ENCODE measurements at regions of chr9 and their contacts with region 1.

Region 1: GRCh38 chr9:15349892-15350778 is 43.1 kb upstream of the TTC39B start:
- DNase-seq: peak in 6 of 14 experiments; percentile 18 to 55 (median 23)
- ATAC-seq: no peak
- H3K4me3 ChIP-seq: no peak overlapping the region
- H3K4me3 Mint-ChIP-seq: no peak overlapping the region
- H3K27ac ChIP-seq: no peak overlapping the region
- H3K27ac Mint-ChIP-seq: no peak overlapping the region
- H3K4me1 ChIP-seq: peaks cover 11% of the 10 kb centered on the region
- H3K4me1 Mint-ChIP-seq: peaks cover 16% of the 10 kb centered on the region
- H3K27me3 ChIP-seq: no peaks in the 10 kb centered on the region
- H3K27me3 Mint-ChIP-seq: no peaks in the 10 kb centered on the region
- CTCF ChIP-seq: no peak

Region 2: GRCh38 chr9:15295761-15296405 is 54.3 kb before region 1 on chr9:
- CTCF ChIA-PET with region 1: no interaction called
- POLR2A ChIA-PET with region 1: interaction called, 4 read pairs
- intact Hi-C with region 1: loop called in 1 of 2 experiments (anchors 5 kb)
- DNase-seq: peak in 4 of 14 experiments; percentile 28 to 87 (median 69)
- ATAC-seq: peak; percentile 39
- H3K4me3 ChIP-seq: peak overlapping the region; percentile 54
- H3K4me3 Mint-ChIP-seq: peak overlapping the region; percentile 81
- H3K27ac ChIP-seq: peak overlapping the region; percentile 87 to 88
- H3K27ac Mint-ChIP-seq: peak overlapping the region; percentile 97
- H3K4me1 ChIP-seq: peaks cover 80% of the 10 kb centered on the region
- H3K4me1 Mint-ChIP-seq: peaks cover 88% of the 10 kb centered on the region
- H3K27me3 ChIP-seq: no peaks in the 10 kb centered on the region
- H3K27me3 Mint-ChIP-seq: no peaks in the 10 kb centered on the region
- CTCF ChIP-seq: no peak

Region 3: GRCh38 chr9:15306757-15307534 is 43.2 kb before region 1 on chr9 and contains the start of gene TTC39B:
- CTCF ChIA-PET with region 1: no interaction called
- POLR2A ChIA-PET with region 1: interaction called, 13 read pairs
- intact Hi-C with region 1: loop called in 1 of 2 experiments (anchors 5 kb)
- DNase-seq: peak; percentile 36 to 90 (median 68)
- ATAC-seq: peak; percentile 60
- H3K4me3 ChIP-seq: peak within 1 kb of the TSS; percentile 99
- H3K4me3 Mint-ChIP-seq: peak within 1 kb of the TSS; percentile 99
- H3K27ac ChIP-seq: peak within 1 kb of the TSS; percentile 75 to 82
- H3K27ac Mint-ChIP-seq: peak within 1 kb of the TSS; percentile 87
- H3K4me1 ChIP-seq: peaks cover 34% of the 10 kb centered on the region
- H3K4me1 Mint-ChIP-seq: peaks cover 64% of the 10 kb centered on the region
- H3K27me3 ChIP-seq: no peaks in the 10 kb centered on the region
- H3K27me3 Mint-ChIP-seq: no peaks in the 10 kb centered on the region
- CTCF ChIP-seq: no peak
- total RNA-seq, gene TTC39B: 37.6 to 43.6 TPM

Measured in CD4-positive, alpha-beta T cell (primary cell).